Tibial artery (tissue), 4 donors: ENCODE measurements at regions of chr15 and their contacts with region 1.

Region 1: GRCh38 chr15:66789029-66790025 is 87.3 kb downstream of the SMAD6 start:
- DNase-seq: peak; percentile 61 to 80
- H3K4me3 ChIP-seq: no peak overlapping the region
- H3K27ac ChIP-seq: peak overlapping the region; percentile 67 to 85
- H3K4me1 ChIP-seq: peaks cover 0 to 23% (median 11%) of the 10 kb centered on the region in 4 donors
- H3K27me3 ChIP-seq: no peaks in the 10 kb centered on the region
- CTCF ChIP-seq: peak; percentile 50 to 54

Region 2: DNA sequence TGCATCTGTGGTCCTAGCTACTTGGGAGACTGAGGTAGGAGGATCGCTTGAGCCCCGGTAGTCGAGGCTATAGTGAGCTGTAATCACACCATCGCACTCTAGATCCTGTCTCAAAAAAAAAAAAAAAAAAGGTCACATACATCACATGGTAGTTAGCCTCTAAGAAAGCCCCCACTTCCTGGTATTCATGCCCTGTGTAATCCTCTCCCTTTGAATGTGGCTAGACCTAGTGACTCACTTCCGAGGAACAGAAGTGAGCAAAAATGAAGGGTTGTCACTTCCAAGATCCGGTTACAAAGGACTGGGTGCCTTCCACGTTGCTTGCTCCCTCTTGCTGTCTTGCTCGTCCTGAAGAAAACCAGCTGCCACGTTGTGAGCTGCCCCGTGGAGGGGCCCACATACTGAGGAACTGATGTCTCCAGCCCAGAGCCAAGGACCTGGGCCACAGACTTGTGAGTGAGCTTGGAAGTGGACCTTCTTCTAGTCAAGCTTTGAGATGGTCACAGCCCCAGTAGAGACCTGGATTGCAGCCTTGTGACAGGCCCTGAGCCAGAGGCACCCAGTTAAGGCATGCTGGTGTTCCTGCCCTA is 210.9 kb before region 1 on chr15:
- intact Hi-C with region 1: no loop called
- DNase-seq: no peak
- H3K4me3 ChIP-seq: no peak overlapping the region
- H3K27ac ChIP-seq: no peak overlapping the region
- H3K4me1 ChIP-seq: no peaks in the 10 kb centered on the region
- H3K27me3 ChIP-seq: no peaks in the 10 kb centered on the region
- CTCF ChIP-seq: no peak

Region 3: DNA sequence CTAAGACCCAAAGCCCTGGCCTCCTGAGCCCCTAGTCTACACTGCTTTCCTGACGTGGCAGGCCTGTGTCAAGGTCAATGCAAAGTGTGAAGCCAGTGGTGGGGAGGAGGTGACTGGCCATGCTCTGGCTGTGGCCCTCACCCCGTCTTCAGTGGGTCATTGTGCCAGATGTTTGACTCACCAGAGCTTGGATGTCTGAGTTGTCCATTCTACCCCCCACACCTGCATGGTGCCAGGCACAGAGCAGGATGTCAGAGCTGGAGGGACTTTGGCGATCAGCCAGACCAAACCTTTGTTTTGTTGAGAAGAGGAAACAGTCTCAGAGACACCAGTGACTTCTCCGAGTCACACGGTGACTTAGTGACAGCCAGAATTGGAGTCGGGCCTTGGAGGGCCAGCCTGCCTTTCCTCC is 37.8 kb before region 1 on chr15:
- intact Hi-C with region 1: no loop called
- DNase-seq: no peak
- H3K4me3 ChIP-seq: no peak overlapping the region
- H3K27ac ChIP-seq: peak overlapping the region; percentile 30 to 56
- H3K4me1 ChIP-seq: peaks cover 5 to 89% (median 70%) of the 10 kb centered on the region in 4 donors
- H3K27me3 ChIP-seq: no peaks in the 10 kb centered on the region
- CTCF ChIP-seq: no peak

Region 4: DNA sequence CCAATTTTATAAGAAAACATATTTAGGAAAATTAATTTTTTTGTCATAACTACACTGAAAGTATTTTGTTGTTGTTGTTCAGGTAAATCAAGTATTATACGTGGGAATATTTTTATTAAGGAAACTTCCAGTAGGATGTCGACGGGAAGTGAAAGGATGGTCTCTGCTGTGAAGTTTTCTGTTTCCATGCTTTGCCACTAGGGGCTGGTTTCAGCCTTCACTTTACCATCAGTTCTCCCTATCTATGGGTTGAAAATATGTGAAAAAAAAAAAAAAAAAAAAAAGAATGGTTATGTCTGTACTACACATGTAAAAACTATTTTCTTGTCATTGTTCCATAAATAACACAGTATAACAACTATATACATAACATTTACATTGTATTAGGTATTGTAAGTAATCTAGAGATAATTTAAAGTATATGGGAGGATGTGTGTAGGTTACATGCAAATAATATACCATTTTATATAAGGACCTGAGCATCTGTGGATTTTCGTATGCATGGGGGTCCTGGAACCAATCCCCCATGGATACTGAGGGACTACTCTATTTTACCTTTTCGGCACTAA is 49.4 kb after region 1 on chr15:
- intact Hi-C with region 1: loop called (anchors 5 kb)
- DNase-seq: no peak
- H3K4me3 ChIP-seq: no peak overlapping the region
- H3K27ac ChIP-seq: peak overlapping the region in 1 of 2 donors; percentile 91
- H3K4me1 ChIP-seq: peaks cover 0 to 42% (median 35%) of the 10 kb centered on the region in 4 donors
- H3K27me3 ChIP-seq: no peaks in the 10 kb centered on the region
- CTCF ChIP-seq: peak; percentile 27 to 39